ENCODE measurements at regions of chr20 and their contacts with region 1.

Region 1: GRCh38 chr20:50186151-50186998 is 4.3 kb upstream of the CEBPB start:
- DNase-seq: peak; percentile 38
- H3K4me3 ChIP-seq: no peak overlapping the region
- H3K27ac ChIP-seq: peak overlapping the region in 3 of 4 donors; percentile 18 to 72 (median 52)
- H3K4me1 ChIP-seq: peaks cover 6 to 28% (median 12%) of the 10 kb centered on the region in 3 donors
- H3K27me3 ChIP-seq: no peaks in the 10 kb centered on the region
- CTCF ChIP-seq: peak; percentile 96 to 100 (median 99)
- POLR2A ChIP-seq: no peak

Region 2: GRCh38 chr20:50292324-50293243 is 106.2 kb after region 1 on chr20:
- intact Hi-C with region 1: no loop called
- DNase-seq: peak; percentile 27
- H3K4me3 ChIP-seq: peak overlapping the region in 1 of 4 donors; percentile 18
- H3K27ac ChIP-seq: peak overlapping the region; percentile 71 to 92 (median 86)
- H3K4me1 ChIP-seq: peaks cover 22 to 55% (median 34%) of the 10 kb centered on the region in 3 donors
- H3K27me3 ChIP-seq: no peaks in the 10 kb centered on the region
- CTCF ChIP-seq: no peak
- POLR2A ChIP-seq: no peak

Region 3: GRCh38 chr20:50462093-50462690 is 275.8 kb after region 1 on chr20:
- intact Hi-C with region 1: loop called (anchors 2 kb)
- DNase-seq: no peak
- H3K4me3 ChIP-seq: no peak overlapping the region
- H3K27ac ChIP-seq: no peak overlapping the region
- H3K4me1 ChIP-seq: peaks cover 5 to 19% (median 12%) of the 10 kb centered on the region in 3 donors
- H3K27me3 ChIP-seq: no peaks in the 10 kb centered on the region
- CTCF ChIP-seq: no peak
- POLR2A ChIP-seq: no peak

Measured in esophagus squamous epithelium (tissue), 5 donors.